Lower leg skin (tissue), 4 donors: ENCODE measurements at regions of chr2 and their contacts with region 1.

Region 1: GRCh38 chr2:25951071-25951547 is 31.2 kb downstream of the KIF3C start:
- DNase-seq: peak; percentile 47 to 94
- H3K4me3 ChIP-seq: no peak overlapping the region
- CTCF ChIP-seq: peak in 2 of 3 donors; percentile 70
- POLR2A ChIP-seq: no peak

Region 2: GRCh38 chr2:26577434-26578112 is 626.5 kb after region 1 on chr2:
- intact Hi-C with region 1: loop called (anchors 10 kb)
- DNase-seq: peak; percentile 44 to 93
- H3K4me3 ChIP-seq: no peak overlapping the region
- CTCF ChIP-seq: peak in 2 of 3 donors; percentile 34 to 82
- POLR2A ChIP-seq: no peak